ENCODE measurements at regions of chr2 and their contacts with region 1.

Region 1: GRCh38 chr2:146997945-146998344 is 846.9 kb upstream of the ACVR2A start:
- DNase-seq: peak; percentile 61
- ATAC-seq: peak; percentile 64
- H3K4me3 ChIP-seq: no peak overlapping the region
- H3K27ac ChIP-seq: peak overlapping the region; percentile 10; the same call in 1 of the 2 replicates
- H3K4me1 ChIP-seq: peaks cover 16% of the 10 kb centered on the region
- H3K27me3 ChIP-seq: no peaks in the 10 kb centered on the region
- CTCF ChIP-seq: no peak

Region 2: GRCh38 chr2:146867472-146867986 is 130.4 kb before region 1 on chr2:
- CTCF ChIA-PET with region 1: no interaction called
- POLR2A ChIA-PET with region 1: no interaction called
- intact Hi-C with region 1: no loop called
- DNase-seq: no peak
- ATAC-seq: no peak
- H3K4me3 ChIP-seq: no peak overlapping the region
- H3K27ac ChIP-seq: no peak overlapping the region
- H3K4me1 ChIP-seq: 0 out of 2 replicates have a peak, but pooled peaks cover 2% of the 10 kb centered on the region
- H3K27me3 ChIP-seq: no peaks in the 10 kb centered on the region
- CTCF ChIP-seq: no peak

Region 3: DNA sequence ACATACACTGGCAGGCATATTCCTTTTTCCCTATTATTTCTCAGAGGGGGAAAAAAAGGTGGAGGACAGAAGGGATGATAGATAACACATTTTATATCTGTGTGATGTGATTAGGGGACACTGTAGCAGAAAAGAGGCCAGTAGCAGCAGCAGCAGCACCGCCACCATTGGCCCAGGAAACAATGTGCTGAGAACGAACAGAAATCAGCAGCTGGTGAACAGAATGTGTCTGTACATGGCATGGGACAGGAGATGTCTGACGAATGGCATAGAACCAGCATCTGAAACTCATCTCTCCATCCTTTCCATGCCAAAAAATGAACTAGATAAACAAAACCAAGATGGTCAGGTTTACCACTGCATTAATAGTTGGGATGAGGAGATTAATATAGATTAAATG is 89.2 kb before region 1 on chr2:
- CTCF ChIA-PET with region 1: no interaction called
- POLR2A ChIA-PET with region 1: no interaction called
- intact Hi-C with region 1: no loop called
- DNase-seq: no peak
- ATAC-seq: no peak
- H3K4me3 ChIP-seq: no peak overlapping the region
- H3K27ac ChIP-seq: no peak overlapping the region
- H3K4me1 ChIP-seq: peaks cover 7% of the 10 kb centered on the region
- H3K27me3 ChIP-seq: no peaks in the 10 kb centered on the region
- CTCF ChIP-seq: no peak

Region 4: DNA sequence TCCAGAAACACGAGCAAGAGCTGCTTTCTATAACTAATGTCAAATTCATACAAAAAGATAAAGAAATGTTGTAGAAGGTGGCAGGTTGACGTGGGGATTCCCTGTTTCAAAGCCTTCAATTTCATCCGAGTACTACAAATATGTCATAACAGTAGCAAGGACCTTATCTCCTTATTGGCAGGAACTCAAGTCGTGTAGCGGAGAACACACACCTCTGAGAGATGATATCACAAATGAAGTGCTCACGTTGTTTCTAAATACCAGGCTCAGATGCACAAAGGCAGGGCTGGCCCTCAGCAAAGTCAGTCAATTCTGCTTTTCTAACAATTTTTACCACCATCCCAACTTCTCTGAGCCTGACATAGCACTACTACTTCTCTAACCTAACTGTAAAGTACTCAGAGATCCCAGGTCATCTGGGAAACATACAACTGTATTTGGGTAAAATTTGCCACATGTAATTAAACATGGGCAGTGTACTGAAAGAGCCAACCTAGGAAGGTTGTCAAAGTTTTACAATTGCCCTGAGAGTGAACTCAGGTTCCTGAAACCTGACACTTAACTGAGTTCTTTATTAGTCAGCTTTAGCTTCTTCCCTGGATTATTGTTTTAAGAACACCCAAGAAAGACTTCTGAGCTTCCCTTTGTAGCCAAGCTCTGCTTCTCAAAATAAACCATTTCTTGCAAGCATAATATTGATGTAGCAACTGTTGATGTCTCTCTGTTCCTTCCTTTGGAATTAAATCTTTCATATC is 33.2 kb after region 1 on chr2:
- CTCF ChIA-PET with region 1: no interaction called
- POLR2A ChIA-PET with region 1: no interaction called
- intact Hi-C with region 1: loop called (anchors 5 kb)
- DNase-seq: peak; percentile 81
- ATAC-seq: peak; percentile 88
- H3K4me3 ChIP-seq: 0 out of 2 replicates have a peak overlapping the region, but pooled peaks have one; percentile 2
- H3K27ac ChIP-seq: peak overlapping the region; percentile 55
- H3K4me1 ChIP-seq: peaks cover 46% of the 10 kb centered on the region
- H3K27me3 ChIP-seq: no peaks in the 10 kb centered on the region
- CTCF ChIP-seq: no peak

Measured in PC-3 (cell line).